CD4-positive, alpha-beta T cell (primary cell): ENCODE measurements at regions of chr5 and their contacts with region 1.

Region 1: GRCh38 chr5:80308526-80308925 is 11.3 kb upstream of the SPZ1 start:
- DNase-seq: no peak
- ATAC-seq: no peak
- H3K4me3 ChIP-seq: no peak overlapping the region
- H3K4me3 Mint-ChIP-seq: no peak overlapping the region
- H3K27ac ChIP-seq: no peak overlapping the region
- H3K27ac Mint-ChIP-seq: no peak overlapping the region
- H3K4me1 ChIP-seq: peaks cover 6% of the 10 kb centered on the region
- H3K4me1 Mint-ChIP-seq: no peaks in the 10 kb centered on the region
- H3K27me3 ChIP-seq: no peaks in the 10 kb centered on the region
- H3K27me3 Mint-ChIP-seq: no peaks in the 10 kb centered on the region
- CTCF ChIP-seq: no peak

Region 2: DNA sequence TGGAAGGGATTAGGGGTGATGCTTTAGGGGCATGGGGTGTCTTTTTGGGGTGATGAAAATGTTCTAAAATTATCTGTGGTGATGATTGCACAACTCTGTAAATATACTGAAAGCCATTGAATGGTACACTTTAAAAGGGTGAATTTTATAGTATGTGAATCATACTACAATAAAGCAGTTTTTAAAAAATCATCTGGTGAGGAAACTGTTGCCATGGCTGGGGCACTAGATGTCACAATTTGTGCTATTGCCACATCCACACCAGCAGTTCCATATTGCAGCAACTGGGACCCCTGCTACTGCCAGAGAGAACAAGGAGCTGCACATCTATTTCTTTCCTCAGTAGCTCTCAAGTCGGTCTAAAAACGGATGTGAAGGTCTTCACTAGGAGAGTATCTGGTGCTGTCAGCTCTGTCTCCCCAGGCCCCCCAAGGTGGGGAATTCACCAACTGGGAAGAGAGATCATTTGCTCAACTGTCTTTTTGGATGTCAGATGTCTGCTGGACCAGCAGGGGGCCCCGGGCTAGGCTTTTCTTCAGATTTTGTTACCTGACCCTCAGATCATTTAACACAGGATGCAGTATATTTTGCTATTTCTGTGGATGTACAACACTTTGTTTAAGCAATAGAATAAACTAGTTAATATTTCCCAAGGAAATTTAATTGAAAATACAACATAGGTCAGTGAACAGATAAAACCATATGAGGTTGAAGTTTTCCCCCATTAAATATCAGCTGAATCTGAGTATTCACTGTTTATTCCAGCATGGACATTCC is 605.7 kb before region 1 on chr5:
- CTCF ChIA-PET with region 1: no interaction called
- POLR2A ChIA-PET with region 1: no interaction called
- intact Hi-C with region 1: loop called in 1 of 2 experiments (anchors 5 kb)
- DNase-seq: peak in 12 of 14 experiments; percentile 7 to 59 (median 25)
- ATAC-seq: no peak
- H3K4me3 ChIP-seq: no peak overlapping the region
- H3K4me3 Mint-ChIP-seq: no peak overlapping the region
- H3K27ac ChIP-seq: no peak overlapping the region
- H3K27ac Mint-ChIP-seq: no peak overlapping the region
- H3K4me1 ChIP-seq: no peaks in the 10 kb centered on the region
- H3K4me1 Mint-ChIP-seq: peaks cover 13% of the 10 kb centered on the region
- H3K27me3 ChIP-seq: no peaks in the 10 kb centered on the region
- H3K27me3 Mint-ChIP-seq: no peaks in the 10 kb centered on the region
- CTCF ChIP-seq: peak; percentile 63

Region 3: DNA sequence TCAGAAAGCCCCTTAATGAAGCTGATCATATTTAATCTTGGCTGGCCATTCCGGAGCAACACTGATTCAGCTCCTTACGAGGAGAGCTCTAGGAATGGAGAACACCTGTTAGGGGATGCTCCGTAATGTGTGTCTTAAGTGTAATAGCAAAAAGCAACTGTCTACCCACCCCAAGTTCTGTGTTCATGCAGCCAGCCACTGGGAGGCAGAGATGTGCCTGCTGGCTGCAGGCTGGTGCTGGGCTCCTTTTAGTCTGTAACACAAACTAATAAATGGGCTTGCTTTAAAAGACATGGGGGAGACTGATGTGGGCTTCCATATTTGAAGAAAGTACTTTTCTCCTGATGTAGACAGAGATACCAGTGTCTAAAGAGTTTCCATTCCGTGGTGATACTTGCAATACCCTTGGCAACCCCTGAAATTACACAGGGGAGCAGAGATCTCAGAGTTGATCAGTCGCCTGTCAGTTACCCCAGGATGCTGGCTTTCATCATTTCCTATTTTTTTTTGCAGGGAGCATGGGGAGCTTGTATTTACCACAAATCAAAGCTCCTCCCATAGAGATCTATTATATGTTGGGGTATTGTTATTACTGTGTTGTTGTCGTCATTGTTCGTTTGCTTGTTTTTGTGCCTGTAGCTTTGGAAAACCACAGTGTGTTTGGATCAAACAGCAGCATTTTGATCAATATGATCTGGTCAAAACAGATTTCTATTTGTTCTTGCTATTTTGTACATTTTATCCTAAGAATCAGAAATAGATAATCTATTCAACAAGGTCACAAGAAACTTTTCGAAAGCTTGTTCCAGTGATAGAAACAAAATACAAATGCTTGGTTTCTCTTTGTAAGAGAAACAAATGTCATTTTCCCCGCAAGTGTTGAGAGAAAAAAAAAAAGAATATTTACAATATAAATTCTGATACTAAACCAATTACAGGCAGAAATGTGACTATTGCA is 383.3 kb before region 1 on chr5:
- CTCF ChIA-PET with region 1: no interaction called
- POLR2A ChIA-PET with region 1: interaction called, 3 read pairs
- intact Hi-C with region 1: loop called in 1 of 2 experiments (anchors 5 kb)
- DNase-seq: peak in 4 of 14 experiments; percentile 9 to 36 (median 21)
- ATAC-seq: no peak
- H3K4me3 ChIP-seq: no peak overlapping the region
- H3K4me3 Mint-ChIP-seq: no peak overlapping the region
- H3K27ac ChIP-seq: no peak overlapping the region
- H3K27ac Mint-ChIP-seq: no peak overlapping the region
- H3K4me1 ChIP-seq: no peaks in the 10 kb centered on the region
- H3K4me1 Mint-ChIP-seq: no peaks in the 10 kb centered on the region
- H3K27me3 ChIP-seq: no peaks in the 10 kb centered on the region
- H3K27me3 Mint-ChIP-seq: no peaks in the 10 kb centered on the region
- CTCF ChIP-seq: no peak

Region 4: GRCh38 chr5:80083101-80083890 is 225.2 kb before region 1 on chr5:
- CTCF ChIA-PET with region 1: interaction called, 20 read pairs
- POLR2A ChIA-PET with region 1: no interaction called
- intact Hi-C with region 1: no loop called
- DNase-seq: peak in 4 of 14 experiments; percentile 20 to 68 (median 59)
- ATAC-seq: peak; percentile 83
- H3K4me3 ChIP-seq: peak overlapping the region; percentile 39
- H3K4me3 Mint-ChIP-seq: peak overlapping the region; percentile 89
- H3K27ac ChIP-seq: no peak overlapping the region
- H3K27ac Mint-ChIP-seq: peak overlapping the region; percentile 71
- H3K4me1 ChIP-seq: peaks cover 10% of the 10 kb centered on the region
- H3K4me1 Mint-ChIP-seq: peaks cover 16% of the 10 kb centered on the region
- H3K27me3 ChIP-seq: no peaks in the 10 kb centered on the region
- H3K27me3 Mint-ChIP-seq: no peaks in the 10 kb centered on the region
- CTCF ChIP-seq: peak; percentile 46